ENCODE measurements at regions of chr17 and their contacts with region 1.

Region 1: GRCh38 chr17:50269477-50270434 is 4.5 kb upstream of the TMEM92 start:
- DNase-seq: peak; percentile 48
- H3K4me3 ChIP-seq: peak overlapping the region; percentile 57
- H3K27ac ChIP-seq: peak overlapping the region; percentile 91
- H3K27me3 ChIP-seq: no peaks in the 10 kb centered on the region
- CTCF ChIP-seq: peak; percentile 87

Region 2: GRCh38 chr17:50169121-50169764 is 100.5 kb before region 1 on chr17:
- CTCF ChIA-PET with region 1: interaction called, 18 read pairs
- POLR2A ChIA-PET with region 1: interaction called, 6 read pairs
- DNase-seq: no peak
- H3K4me3 ChIP-seq: no peak overlapping the region
- H3K27ac ChIP-seq: no peak overlapping the region
- H3K27me3 ChIP-seq: no peaks in the 10 kb centered on the region
- CTCF ChIP-seq: peak; percentile 98

Region 3: DNA sequence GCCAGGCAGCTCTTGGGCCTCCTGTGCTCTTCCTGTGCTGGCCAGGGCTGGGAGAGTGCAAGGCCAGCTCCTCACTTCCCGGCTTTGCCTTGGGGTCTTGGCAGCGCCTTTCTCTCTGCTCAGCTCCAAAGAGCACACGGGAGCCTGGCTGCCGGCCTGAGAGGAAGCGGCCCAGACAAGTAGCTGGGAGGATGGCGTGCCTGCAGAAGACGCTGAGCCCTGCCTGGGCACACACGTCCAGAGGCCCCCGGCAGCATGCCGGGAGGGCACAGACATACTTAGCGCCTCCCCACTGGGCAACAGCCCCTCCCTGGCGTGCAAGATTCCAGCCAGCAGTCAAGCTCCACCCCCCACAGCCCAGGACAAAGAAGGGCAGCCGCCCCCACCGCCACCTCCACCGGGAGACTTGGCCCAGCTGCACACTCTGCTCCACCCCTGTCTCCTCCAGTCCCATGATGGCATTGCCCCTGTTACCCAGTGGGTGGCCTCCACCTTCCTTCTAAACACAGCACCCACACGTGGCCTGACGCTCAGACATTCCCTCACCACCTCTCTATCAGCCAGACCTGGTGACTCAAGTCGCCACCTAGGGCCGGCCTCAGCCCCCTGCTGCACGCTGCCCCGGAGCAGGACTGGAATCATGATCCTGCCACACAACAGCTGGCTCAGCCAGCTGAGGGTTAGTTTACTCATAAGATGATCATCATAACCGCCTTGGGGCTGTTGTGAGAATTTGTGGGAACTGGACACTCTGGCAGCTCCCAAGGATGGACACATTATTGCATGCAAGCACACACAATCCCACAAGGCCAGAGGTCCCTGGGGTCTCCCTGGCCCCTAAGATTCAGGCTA is 91.5 kb before region 1 on chr17:
- CTCF ChIA-PET with region 1: interaction called, 5 read pairs
- POLR2A ChIA-PET with region 1: interaction called, 48 read pairs
- DNase-seq: peak; percentile 92
- H3K4me3 ChIP-seq: 0 out of 2 replicates have a peak overlapping the region, but pooled peaks have one; percentile 4
- H3K27ac ChIP-seq: peak overlapping the region; percentile 98
- H3K27me3 ChIP-seq: no peaks in the 10 kb centered on the region
- CTCF ChIP-seq: peak; percentile 59

Region 4: DNA sequence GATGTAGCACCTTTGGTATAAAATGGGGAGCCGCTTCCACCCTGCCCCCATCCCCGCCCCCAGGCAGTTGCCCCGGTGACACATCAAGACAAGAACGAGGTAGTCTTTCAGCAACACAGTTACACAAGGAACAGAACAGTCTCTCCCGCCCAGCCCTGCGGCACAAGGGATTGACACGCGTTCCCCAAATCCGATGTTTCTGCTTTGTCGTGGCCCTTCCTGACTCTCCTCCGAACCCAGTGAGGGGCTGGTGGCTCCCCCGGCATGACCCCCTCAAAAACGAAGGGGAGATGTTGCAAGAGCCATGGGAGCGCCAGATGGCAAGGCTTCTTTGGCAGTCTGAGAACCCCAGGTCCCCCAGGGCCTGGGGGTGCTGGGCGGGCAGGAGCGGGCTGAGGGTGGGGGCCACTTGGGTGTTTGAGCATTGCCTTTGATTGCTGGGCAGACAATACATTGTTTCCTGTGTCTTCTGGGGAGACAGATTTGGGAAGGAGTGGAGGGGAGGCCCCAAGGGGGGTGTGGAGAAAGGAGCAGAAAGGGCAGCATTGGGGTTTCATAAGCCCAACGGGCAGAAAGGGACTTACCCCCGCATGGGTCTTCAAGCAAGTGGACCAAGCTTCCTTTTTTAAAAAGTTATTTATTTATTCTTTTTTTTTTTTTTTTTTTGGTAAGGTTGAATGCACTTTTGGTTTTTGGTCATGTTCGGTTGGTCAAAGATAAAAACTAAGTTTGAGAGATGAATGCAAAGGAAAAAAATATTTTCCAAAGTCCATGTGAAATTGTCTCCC is 85.0 kb before region 1 on chr17:
- CTCF ChIA-PET with region 1: interaction called, 3 read pairs
- POLR2A ChIA-PET with region 1: interaction called, 64 read pairs
- DNase-seq: no peak
- H3K4me3 ChIP-seq: no peak overlapping the region
- H3K27ac ChIP-seq: peak overlapping the region; percentile 98
- H3K27me3 ChIP-seq: no peaks in the 10 kb centered on the region
- CTCF ChIP-seq: no peak

Region 5: GRCh38 chr17:50218771-50219315 is 50.9 kb before region 1 on chr17:
- CTCF ChIA-PET with region 1: interaction called, 12 read pairs
- POLR2A ChIA-PET with region 1: interaction called, 63 read pairs
- DNase-seq: peak; percentile 89
- H3K4me3 ChIP-seq: peak overlapping the region; percentile 29
- H3K27ac ChIP-seq: peak overlapping the region; percentile 97
- H3K27me3 ChIP-seq: no peaks in the 10 kb centered on the region
- CTCF ChIP-seq: no peak

Region 6: DNA sequence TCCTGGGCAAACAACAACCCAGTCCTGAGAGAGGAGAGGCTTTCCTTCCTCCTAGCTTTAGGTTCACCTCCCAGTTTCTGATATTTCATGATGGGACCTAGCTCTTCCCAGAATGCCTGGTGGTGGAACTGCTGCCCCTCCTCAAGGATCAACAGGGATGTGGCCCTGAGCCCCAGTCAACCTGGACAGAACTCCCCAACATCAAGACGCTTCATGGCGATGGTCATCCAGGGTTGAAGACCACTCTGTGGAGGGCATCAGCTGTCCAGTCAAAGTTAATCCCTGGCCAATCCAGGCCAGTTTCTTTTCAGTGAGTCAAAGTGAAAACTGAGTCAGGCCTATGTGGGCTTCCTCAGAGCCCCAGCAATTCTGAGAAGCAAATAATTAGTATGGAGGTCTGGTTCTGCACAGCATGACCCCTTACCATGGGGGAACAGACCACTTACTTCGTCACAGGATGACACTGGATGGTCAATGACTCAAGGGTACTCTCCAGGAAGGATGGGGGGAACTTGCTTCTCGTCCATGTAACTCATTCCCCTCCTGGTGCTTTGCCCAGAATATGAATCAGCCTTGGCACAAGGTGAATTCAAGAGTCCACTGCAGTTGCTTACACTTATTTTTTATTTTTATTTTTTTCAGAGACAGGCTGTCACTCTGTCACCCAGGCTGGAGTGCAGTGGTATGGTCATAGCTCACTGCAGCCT is 61.5 kb after region 1 on chr17:
- CTCF ChIA-PET with region 1: no interaction called
- POLR2A ChIA-PET with region 1: no interaction called
- DNase-seq: peak; percentile 63
- H3K4me3 ChIP-seq: no peak overlapping the region
- H3K27ac ChIP-seq: peak overlapping the region; percentile 31
- H3K27me3 ChIP-seq: peaks cover 2% of the 10 kb centered on the region
- CTCF ChIP-seq: no peak

Measured in AG04450 (cell line).